Mammary epithelial cell (primary cell): ENCODE measurements at regions of chr21 and their contacts with region 1.

Region 1: GRCh38 chr21:35606578-35606977 is 453.7 kb downstream of the SETD4 start:
- DNase-seq: peak; percentile 90
- H3K4me3 ChIP-seq: peak overlapping the region; percentile 1 to 10 (median 6)
- H3K27ac ChIP-seq: peak overlapping the region; percentile 85
- H3K4me1 ChIP-seq: peaks cover 57% of the 10 kb centered on the region
- H3K27me3 ChIP-seq: no peaks in the 10 kb centered on the region
- CTCF ChIP-seq: no peak

Region 2: DNA sequence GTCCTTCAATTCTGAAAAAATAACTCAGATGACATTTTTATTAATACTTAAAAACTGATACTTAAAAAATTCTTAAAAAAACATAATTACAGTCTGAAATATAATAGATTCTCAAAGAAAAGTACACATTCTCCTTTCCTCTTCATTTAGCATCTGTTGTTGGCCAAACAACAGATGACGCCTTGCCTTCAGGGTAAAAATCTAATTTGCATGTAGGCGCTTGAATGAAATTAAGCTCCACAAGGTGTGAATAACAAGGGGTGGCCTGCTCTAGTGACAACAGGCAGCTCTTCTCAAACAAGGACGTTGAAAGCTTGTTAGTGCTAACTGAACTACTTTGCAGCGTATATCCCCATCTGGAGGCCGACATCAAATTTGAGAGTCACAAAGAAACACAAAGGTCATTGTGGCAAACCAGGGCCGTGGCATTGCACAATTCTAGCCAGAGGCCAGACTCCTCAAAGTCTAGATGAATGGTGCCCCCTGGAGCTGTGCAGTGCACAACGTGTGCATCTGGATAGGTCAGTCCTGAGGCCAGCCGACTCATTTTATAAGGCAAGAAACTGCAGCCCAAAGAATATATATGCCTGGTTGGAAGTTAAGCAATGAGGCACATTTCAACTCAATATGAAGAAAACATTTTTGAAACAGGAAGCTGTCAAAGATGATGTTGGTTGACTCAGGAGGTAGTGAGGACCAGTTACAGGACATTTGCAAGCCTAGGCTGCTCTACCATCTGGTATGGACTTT is 98.3 kb before region 1 on chr21:
- CTCF ChIA-PET with region 1: no interaction called
- dilution Hi-C with region 1: no loop called
- in situ Hi-C with region 1: no loop called
- intact Hi-C with region 1: loop called (anchors 5 kb)
- DNase-seq: peak; percentile 56
- H3K4me3 ChIP-seq: no peak overlapping the region
- H3K27ac ChIP-seq: no peak overlapping the region
- H3K4me1 ChIP-seq: peaks cover 22% of the 10 kb centered on the region
- H3K27me3 ChIP-seq: no peaks in the 10 kb centered on the region
- CTCF ChIP-seq: peak in 1 of 2 donors; percentile 6

Region 3: GRCh38 chr21:35528116-35529042 is 78.2 kb before region 1 on chr21:
- CTCF ChIA-PET with region 1: no interaction called
- dilution Hi-C with region 1: no loop called
- in situ Hi-C with region 1: no loop called
- intact Hi-C with region 1: loop called (anchors 5 kb)
- DNase-seq: no peak
- H3K4me3 ChIP-seq: no peak overlapping the region
- H3K27ac ChIP-seq: no peak overlapping the region
- H3K4me1 ChIP-seq: peaks cover 19% of the 10 kb centered on the region
- H3K27me3 ChIP-seq: no peaks in the 10 kb centered on the region
- CTCF ChIP-seq: no peak

Region 4: GRCh38 chr21:35861661-35862060 is 255.1 kb after region 1 on chr21:
- CTCF ChIA-PET with region 1: no interaction called
- dilution Hi-C with region 1: no loop called
- in situ Hi-C with region 1: no loop called
- intact Hi-C with region 1: no loop called
- DNase-seq: no peak
- H3K4me3 ChIP-seq: no peak overlapping the region
- H3K27ac ChIP-seq: no peak overlapping the region
- H3K4me1 ChIP-seq: no peaks in the 10 kb centered on the region
- H3K27me3 ChIP-seq: no peaks in the 10 kb centered on the region
- CTCF ChIP-seq: no peak